H1 (cell line): ENCODE measurements at regions of chr1 and their contacts with region 1.

Region 1: DNA sequence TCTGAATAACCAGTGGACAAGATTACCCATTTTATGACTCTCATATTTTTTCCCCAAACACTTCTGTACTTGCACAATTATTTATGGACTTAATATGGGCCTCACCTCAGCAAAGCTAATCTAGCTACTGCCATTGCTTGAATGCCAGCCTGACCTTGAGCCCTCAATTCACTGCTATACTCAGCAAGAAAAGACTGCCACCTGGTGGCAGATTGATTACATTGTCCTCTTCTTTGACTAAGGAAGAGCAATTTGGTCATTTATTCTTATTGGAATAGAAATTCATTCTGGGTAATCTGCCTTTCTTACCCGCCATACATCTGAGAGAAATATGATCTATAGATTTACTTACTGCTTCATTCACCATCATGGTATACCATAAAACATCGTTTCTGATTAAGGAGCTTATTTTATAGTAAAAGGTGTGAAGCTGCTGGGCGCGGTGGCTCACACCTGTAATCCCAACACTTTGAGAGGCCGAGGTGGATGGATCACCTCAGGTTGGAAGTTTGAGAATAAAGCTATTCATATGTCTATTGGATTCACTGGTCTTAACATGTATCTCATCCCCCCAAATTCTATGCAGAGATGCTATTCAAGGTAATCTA is 32.9 kb upstream of the DIPK1A start:
- DNase-seq: no peak
- H3K4me3 ChIP-seq: no peak overlapping the region
- H3K27ac ChIP-seq: no peak overlapping the region
- H3K4me1 ChIP-seq: no peaks in the 10 kb centered on the region
- H3K27me3 ChIP-seq: no peaks in the 10 kb centered on the region
- CTCF ChIP-seq: peak in 2 of 3 experiments; percentile 80 to 88; a peak in 3 of 4 replicates
- EP300 ChIP-seq: no peak
- POLR2A ChIP-seq: no peak
- RAD21 ChIP-seq: peak; percentile 91 to 93

Region 2: GRCh38 chr1:92858564-92859399 is 135.4 kb before region 1 on chr1:
- CTCF ChIA-PET with region 1: interaction called, 79 read pairs
- POLR2A ChIA-PET with region 1: interaction called, 3 read pairs
- DNase-seq: no peak
- H3K4me3 ChIP-seq: no peak overlapping the region
- H3K27ac ChIP-seq: no peak overlapping the region
- H3K4me1 ChIP-seq: no peaks in the 10 kb centered on the region
- H3K27me3 ChIP-seq: no peaks in the 10 kb centered on the region
- CTCF ChIP-seq: peak in 2 of 3 experiments; percentile 88 to 98; a peak in 3 of 4 replicates
- EP300 ChIP-seq: no peak
- POLR2A ChIP-seq: no peak
- RAD21 ChIP-seq: peak; percentile 95 to 96

Region 3: GRCh38 chr1:92960395-92961130 is 33.6 kb before region 1 on chr1:
- CTCF ChIA-PET with region 1: interaction called, 37 read pairs
- POLR2A ChIA-PET with region 1: interaction called, 8 read pairs
- DNase-seq: no peak
- H3K4me3 ChIP-seq: peak overlapping the region; percentile 55 to 81 (median 63)
- H3K27ac ChIP-seq: no peak overlapping the region
- H3K4me1 ChIP-seq: peaks cover 0 to 4% (median 1%) of the 10 kb centered on the region in 4 experiments; a peak in 4 of 7 replicates
- H3K27me3 ChIP-seq: peaks cover 0 to 7% (median 2%) of the 10 kb centered on the region in 4 experiments; a peak in 4 of 7 replicates
- CTCF ChIP-seq: peak; percentile 57 to 69 (median 59)
- EP300 ChIP-seq: no peak
- POLR2A ChIP-seq: no peak
- RAD21 ChIP-seq: peak; percentile 55 to 65

Region 4: DNA sequence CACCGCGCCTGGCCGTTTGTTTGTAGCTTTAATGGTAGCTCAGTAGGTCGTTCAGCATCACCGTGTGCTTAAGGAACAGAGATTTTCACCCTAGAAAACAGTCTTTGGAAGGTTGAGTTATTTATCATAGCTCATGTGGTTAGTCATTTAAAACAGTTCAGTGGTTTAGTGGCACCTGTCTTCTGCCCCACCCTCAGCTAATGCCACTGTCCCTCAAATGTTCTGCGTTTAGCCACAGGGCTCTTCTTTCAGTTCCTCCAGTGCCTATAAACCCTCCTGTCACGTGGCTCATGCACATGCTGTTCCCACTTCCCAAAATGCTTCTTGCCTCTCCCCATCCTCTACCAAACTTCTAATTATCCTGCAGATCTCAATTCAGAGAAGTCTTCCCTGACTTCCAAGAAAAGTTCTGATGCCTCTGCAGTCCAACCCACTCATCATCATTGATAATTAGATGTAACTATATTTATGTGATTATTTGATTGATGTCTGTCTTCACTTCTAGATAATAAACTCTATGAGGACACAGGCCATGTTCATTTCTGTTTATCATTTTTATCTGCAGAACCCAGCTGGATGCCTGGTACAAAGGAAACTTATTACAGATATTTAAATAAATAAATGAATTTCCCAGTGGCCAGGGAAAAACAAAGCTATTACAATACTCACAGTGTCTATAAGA is 18.5 kb before region 1 on chr1:
- CTCF ChIA-PET with region 1: interaction called, 67 read pairs
- POLR2A ChIA-PET with region 1: no interaction called
- DNase-seq: no peak
- H3K4me3 ChIP-seq: no peak overlapping the region
- H3K27ac ChIP-seq: no peak overlapping the region
- H3K4me1 ChIP-seq: peaks cover 0 to 6% (median 0%) of the 10 kb centered on the region in 4 experiments; a peak in 1 of 7 replicates
- H3K27me3 ChIP-seq: no peaks in the 10 kb centered on the region; a peak in 1 of 7 replicates
- CTCF ChIP-seq: no peak
- EP300 ChIP-seq: no peak
- POLR2A ChIP-seq: no peak
- RAD21 ChIP-seq: no peak

Region 5: DNA sequence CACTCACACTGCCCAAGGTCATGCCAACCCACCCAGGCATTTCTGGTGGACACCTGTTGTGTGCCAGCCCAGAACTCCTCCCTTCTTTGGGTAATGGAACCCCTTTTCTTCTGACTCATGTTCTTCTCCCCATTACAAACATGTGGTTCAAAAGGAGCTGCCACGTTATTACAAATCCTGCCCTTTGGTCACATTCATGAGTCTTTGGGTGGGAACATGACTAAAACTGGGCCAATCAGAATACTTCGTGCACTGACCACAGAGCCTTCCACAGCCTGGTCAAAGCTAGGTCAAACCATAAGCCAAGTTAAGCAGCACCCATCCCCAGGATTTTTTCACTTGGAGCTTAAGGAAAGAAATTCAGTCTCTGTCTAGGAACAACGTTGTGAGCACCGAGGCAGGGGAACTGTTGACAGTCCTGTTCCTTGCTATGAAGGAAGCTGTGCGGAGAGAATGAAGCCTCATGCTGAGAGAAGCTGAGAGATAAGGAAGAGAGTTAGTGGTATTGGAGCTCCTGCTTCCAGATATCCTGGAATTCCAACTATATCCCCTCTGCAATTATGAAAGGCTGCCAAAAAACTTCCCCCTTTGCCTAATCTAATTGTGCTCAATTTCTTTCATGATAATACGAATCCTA is 13.8 kb after region 1 on chr1:
- CTCF ChIA-PET with region 1: interaction called, 24 read pairs
- POLR2A ChIA-PET with region 1: no interaction called
- DNase-seq: peak in 1 of 2 experiments; percentile 26
- H3K4me3 ChIP-seq: no peak overlapping the region
- H3K27ac ChIP-seq: no peak overlapping the region
- H3K4me1 ChIP-seq: no peaks in the 10 kb centered on the region
- H3K27me3 ChIP-seq: no peaks in the 10 kb centered on the region
- CTCF ChIP-seq: no peak
- EP300 ChIP-seq: no peak
- POLR2A ChIP-seq: no peak
- RAD21 ChIP-seq: no peak

Region 6: DNA sequence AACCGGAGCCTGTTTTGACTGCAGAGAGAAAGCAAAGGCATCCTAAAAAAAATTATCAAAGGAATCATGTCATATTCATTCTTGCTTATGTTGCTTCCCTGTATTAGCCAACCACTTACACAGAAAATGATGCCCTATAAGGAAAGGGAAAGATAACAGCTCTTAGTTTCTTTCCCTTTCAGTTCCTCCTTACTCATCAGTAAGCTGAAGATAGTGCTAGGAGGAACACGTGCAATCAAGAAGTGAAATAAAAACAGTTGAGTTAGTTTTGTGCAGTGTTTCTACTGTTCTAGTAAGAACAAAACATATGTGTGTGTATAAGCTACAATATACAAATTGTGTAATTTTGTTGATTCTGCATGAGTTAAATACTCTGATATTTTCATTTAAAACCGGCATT is 39.6 kb after region 1 on chr1:
- CTCF ChIA-PET with region 1: no interaction called
- POLR2A ChIA-PET with region 1: no interaction called
- DNase-seq: no peak
- H3K4me3 ChIP-seq: no peak overlapping the region
- H3K27ac ChIP-seq: no peak overlapping the region
- H3K4me1 ChIP-seq: peaks cover 0 to 2% (median 0%) of the 10 kb centered on the region in 4 experiments; a peak in 1 of 7 replicates
- H3K27me3 ChIP-seq: no peaks in the 10 kb centered on the region
- CTCF ChIP-seq: no peak
- EP300 ChIP-seq: no peak
- POLR2A ChIP-seq: no peak
- RAD21 ChIP-seq: no peak

Region 7: GRCh38 chr1:93061895-93062792 is 67.9 kb after region 1 on chr1:
- CTCF ChIA-PET with region 1: interaction called, 22 read pairs
- POLR2A ChIA-PET with region 1: no interaction called
- DNase-seq: peak in 1 of 2 experiments; percentile 49
- H3K4me3 ChIP-seq: no peak overlapping the region
- H3K27ac ChIP-seq: no peak overlapping the region
- H3K4me1 ChIP-seq: no peaks in the 10 kb centered on the region
- H3K27me3 ChIP-seq: no peaks in the 10 kb centered on the region
- CTCF ChIP-seq: peak; percentile 58 to 78 (median 75)
- EP300 ChIP-seq: no peak
- POLR2A ChIP-seq: no peak
- RAD21 ChIP-seq: peak; percentile 86 to 89

Region 8: GRCh38 chr1:93123201-93123783 is 129.1 kb after region 1 on chr1:
- CTCF ChIA-PET with region 1: no interaction called
- POLR2A ChIA-PET with region 1: no interaction called
- DNase-seq: no peak
- H3K4me3 ChIP-seq: no peak overlapping the region
- H3K27ac ChIP-seq: no peak overlapping the region
- H3K4me1 ChIP-seq: peaks cover 0 to 9% (median 2%) of the 10 kb centered on the region in 4 experiments; a peak in 4 of 7 replicates
- H3K27me3 ChIP-seq: no peaks in the 10 kb centered on the region
- CTCF ChIP-seq: no peak
- EP300 ChIP-seq: no peak
- POLR2A ChIP-seq: no peak
- RAD21 ChIP-seq: no peak

Region 9: DNA sequence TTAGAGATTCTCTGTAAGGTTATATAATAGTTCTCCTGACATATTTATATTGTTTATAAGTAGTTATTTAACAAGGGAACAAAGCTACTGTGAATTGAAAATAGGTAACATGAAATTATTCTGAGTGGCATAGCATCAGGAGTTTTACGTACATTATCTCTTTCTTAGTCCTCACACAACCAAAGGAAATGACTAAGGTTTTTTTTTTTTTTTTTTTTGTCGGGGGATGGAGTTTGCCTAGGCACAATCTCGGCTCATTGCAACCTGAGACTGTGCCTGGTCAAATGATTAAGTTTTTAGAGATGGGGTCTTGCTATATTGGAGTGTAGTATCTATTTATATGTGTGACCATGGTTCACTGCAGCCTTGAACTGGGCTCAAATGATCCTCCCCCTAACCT is 161.1 kb after region 1 on chr1:
- CTCF ChIA-PET with region 1: no interaction called
- POLR2A ChIA-PET with region 1: no interaction called
- DNase-seq: no peak
- H3K4me3 ChIP-seq: no peak overlapping the region
- H3K27ac ChIP-seq: no peak overlapping the region
- H3K4me1 ChIP-seq: no peaks in the 10 kb centered on the region; a peak in 1 of 7 replicates
- H3K27me3 ChIP-seq: no peaks in the 10 kb centered on the region
- CTCF ChIP-seq: no peak
- EP300 ChIP-seq: no peak
- POLR2A ChIP-seq: no peak
- RAD21 ChIP-seq: no peak

Region 10: GRCh38 chr1:93219443-93219842 is 225.2 kb after region 1 on chr1:
- CTCF ChIA-PET with region 1: no interaction called
- POLR2A ChIA-PET with region 1: no interaction called
- DNase-seq: no peak
- H3K4me3 ChIP-seq: no peak overlapping the region
- H3K27ac ChIP-seq: no peak overlapping the region
- H3K4me1 ChIP-seq: no peaks in the 10 kb centered on the region
- H3K27me3 ChIP-seq: no peaks in the 10 kb centered on the region
- CTCF ChIP-seq: no peak
- EP300 ChIP-seq: no peak
- POLR2A ChIP-seq: no peak
- RAD21 ChIP-seq: no peak